ENCODE measurements at regions of chr10 and their contacts with region 1.

Region 1: DNA sequence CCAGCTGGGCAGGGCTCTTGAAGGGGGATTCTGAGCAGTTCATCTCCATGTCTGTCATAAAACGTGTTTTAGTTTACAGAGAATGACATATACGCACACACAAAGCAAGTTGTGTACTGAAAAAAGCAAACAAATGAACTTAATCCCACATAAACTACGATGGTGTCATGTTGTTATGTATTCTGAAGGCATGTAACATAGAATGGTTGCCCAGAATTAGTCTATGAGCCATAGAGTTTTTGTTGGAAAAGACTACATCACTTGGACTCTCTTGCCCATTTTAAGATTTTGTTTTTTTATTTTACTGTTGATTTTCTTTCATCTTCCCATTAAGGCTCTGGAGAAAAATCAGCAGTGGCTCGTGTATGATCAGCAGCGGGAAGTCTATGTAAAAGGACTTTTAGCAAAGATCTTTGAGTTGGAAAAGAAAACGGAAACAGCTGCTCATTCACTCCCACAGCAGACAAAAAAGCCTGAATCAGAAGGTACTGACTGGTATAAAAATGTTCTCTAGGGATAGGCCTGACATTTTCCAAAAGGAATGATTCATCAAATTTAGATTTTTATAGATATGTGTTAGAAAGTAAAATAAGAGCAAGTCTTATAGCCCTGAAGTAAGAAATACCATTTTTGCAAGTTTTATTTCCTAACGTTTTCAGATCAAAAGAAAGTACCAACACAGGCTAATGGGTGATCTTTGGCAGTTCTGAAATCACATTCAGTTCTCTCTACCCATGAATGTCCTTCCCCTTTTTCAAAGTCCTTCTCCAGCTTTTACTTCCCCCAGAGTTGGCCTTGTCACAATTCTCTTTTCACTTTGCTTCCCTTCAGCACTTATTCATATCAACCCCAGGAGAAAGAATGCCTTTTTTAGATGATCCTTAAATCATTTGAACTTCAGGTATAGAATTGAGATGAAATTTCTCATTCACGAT is 18.9 kb downstream of the CEP55 start:
- DNase-seq: no peak
- ATAC-seq: peak; percentile 67
- H3K4me3 ChIP-seq: no peak overlapping the region
- H3K4me3 Mint-ChIP-seq: no peak overlapping the region
- H3K27ac ChIP-seq: no peak overlapping the region
- H3K27ac Mint-ChIP-seq: no peak overlapping the region
- H3K4me1 ChIP-seq: no peaks in the 10 kb centered on the region
- H3K4me1 Mint-ChIP-seq: peaks cover 0 to 5% (median 0%) of the 10 kb centered on the region in 7 donors
- H3K27me3 ChIP-seq: no peaks in the 10 kb centered on the region
- H3K27me3 Mint-ChIP-seq: no peaks in the 10 kb centered on the region

Region 2: DNA sequence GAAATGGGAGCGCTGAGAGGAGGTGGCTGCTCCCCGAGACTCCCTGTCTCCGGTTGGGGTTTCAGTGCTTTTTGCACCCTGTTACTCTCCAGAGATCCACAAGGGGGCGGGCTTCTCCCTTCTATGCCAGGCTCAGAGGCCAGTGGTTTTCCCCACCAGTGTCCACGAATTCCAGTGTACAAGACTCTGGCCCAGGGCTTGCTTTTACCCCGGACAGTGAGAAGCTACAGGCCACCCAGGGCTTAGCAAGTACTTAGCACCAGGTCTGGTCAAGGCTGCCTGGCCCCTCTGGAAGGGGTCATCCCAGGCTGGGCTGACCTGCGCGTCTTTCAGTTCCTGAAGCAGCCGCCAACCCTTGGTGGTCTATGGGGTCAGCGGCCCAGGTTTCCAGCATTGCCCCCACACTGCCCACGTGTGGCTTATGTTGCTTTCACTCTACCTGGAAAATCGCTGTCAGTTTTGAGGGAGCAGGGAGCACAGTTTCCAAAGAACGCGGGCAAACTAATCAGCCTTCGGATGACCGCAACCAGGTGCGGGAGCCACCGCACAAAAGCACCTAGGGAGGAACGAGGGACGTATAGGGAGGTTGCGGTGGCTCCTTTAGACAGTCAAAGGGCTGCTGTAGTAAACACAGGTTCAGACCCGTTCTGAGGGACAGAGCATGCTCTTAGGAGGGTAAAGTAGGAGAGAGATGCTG is 434.8 kb before region 1 on chr10:
- CTCF ChIA-PET with region 1: interaction called, 3 read pairs
- POLR2A ChIA-PET with region 1: no interaction called
- intact Hi-C with region 1: loop called in 1 of 2 experiments (anchors 5 kb)
- DNase-seq: peak in 8 of 9 donors; percentile 18 to 57 (median 44)
- ATAC-seq: peak; percentile 81
- H3K4me3 ChIP-seq: no peak overlapping the region
- H3K4me3 Mint-ChIP-seq: peak overlapping the region in 4 of 10 donors; percentile 2 to 70 (median 44)
- H3K27ac ChIP-seq: no peak overlapping the region
- H3K27ac Mint-ChIP-seq: no peak overlapping the region
- H3K4me1 ChIP-seq: no peaks in the 10 kb centered on the region
- H3K4me1 Mint-ChIP-seq: peaks cover 4 to 8% (median 7%) of the 10 kb centered on the region in 7 donors
- H3K27me3 ChIP-seq: no peaks in the 10 kb centered on the region
- H3K27me3 Mint-ChIP-seq: peaks cover 39 to 51% (median 45%) of the 10 kb centered on the region in 5 donors